ENCODE measurements at regions of chr11 and their contacts with region 1.

Region 1: GRCh38 chr11:115496917-115497702 is 7.1 kb downstream of the CADM1 start:
- DNase-seq: no peak
- H3K4me3 ChIP-seq: peak overlapping the region in 3 of 59 donors; percentile 2 to 17 (median 8)
- H3K27ac ChIP-seq: peak overlapping the region in 31 of 59 donors; percentile 2 to 75 (median 29)
- H3K27me3 ChIP-seq: no peaks in the 10 kb centered on the region
- CTCF ChIP-seq: peak in 16 of 56 donors; percentile 6 to 36 (median 18)

Region 2: GRCh38 chr11:115459563-115459962 is 37.5 kb before region 1 on chr11:
- intact Hi-C with region 1: loop called in 1 of 2 experiments (anchors 5 kb)
- DNase-seq: no peak
- H3K4me3 ChIP-seq: peak overlapping the region in 1 of 59 donors; percentile 10
- H3K27ac ChIP-seq: no peak overlapping the region
- H3K27me3 ChIP-seq: no peaks in the 10 kb centered on the region
- CTCF ChIP-seq: no peak